HepG2 (cell line): ENCODE measurements at regions of chr19 and their contacts with region 1.

Region 1: GRCh38 chr19:58196901-58197616 is 14.2 kb downstream of the ZNF274 start:
- DNase-seq: peak; percentile 10
- ATAC-seq: no peak
- H3K4me3 ChIP-seq: no peak overlapping the region
- H3K27ac ChIP-seq: no peak overlapping the region
- H3K4me1 ChIP-seq: no peaks in the 10 kb centered on the region
- H3K27me3 ChIP-seq: no peaks in the 10 kb centered on the region; a peak in 1 of 5 replicates
- CTCF ChIP-seq: no peak
- EP300 ChIP-seq: no peak
- POLR2A ChIP-seq: no peak
- RAD21 ChIP-seq: no peak

Region 2: DNA sequence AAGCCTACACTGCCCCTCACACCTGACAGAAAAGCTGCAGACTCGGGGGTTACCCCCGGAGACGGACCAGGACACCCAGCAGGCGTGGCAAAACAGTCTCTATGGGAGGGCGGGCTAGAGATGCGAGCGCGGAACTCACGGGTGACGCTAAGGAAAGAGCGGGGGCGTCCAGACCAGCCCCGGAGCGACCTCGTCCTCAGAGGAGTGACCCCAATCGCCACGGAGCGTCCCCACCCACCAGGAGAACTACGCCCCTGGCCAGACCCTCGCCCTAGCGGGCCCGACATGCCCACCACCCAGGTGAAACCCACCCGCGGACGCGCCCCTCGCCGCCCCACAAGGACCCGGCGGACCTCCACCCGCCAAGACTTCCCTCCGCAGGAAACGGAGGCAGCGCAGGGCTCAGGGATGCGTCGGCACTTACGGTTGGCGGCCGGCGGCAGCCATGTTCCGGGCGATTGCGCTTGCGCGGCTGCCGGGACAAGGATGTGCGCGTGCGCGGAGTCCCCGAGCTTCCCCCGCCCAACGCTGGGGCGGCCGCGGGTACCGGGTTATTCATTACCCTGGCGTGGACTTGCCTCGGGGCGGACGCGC is 46.6 kb before region 1 on chr19 and contains the start of gene ZNF329:
- CTCF ChIA-PET with region 1: no interaction called
- POLR2A ChIA-PET with region 1: no interaction called
- in situ Hi-C with region 1: no loop called
- intact Hi-C with region 1: no loop called
- DNase-seq: peak; percentile 66
- ATAC-seq: peak; percentile 41
- H3K4me3 ChIP-seq: peak within 1 kb of the TSS; percentile 62 to 89 (median 85)
- H3K27ac ChIP-seq: peak within 1 kb of the TSS; percentile 73
- H3K4me1 ChIP-seq: peaks cover 15% of the 10 kb centered on the region
- H3K27me3 ChIP-seq: no peaks in the 10 kb centered on the region; a peak in 1 of 5 replicates
- CTCF ChIP-seq: peak; percentile 8; the same call in 1 of the 2 replicates
- EP300 ChIP-seq: no peak
- POLR2A ChIP-seq: peak; percentile 46 to 63; a peak in 3 of 4 replicates
- RAD21 ChIP-seq: no peak
- total RNA-seq, gene ZNF329: 9.6 and 11.4 TPM in 2 replicates

Region 3: GRCh38 chr19:58261968-58262921 is 65.2 kb after region 1 on chr19:
- CTCF ChIA-PET with region 1: no interaction called
- POLR2A ChIA-PET with region 1: no interaction called
- in situ Hi-C with region 1: loop called (anchors 10 kb)
- intact Hi-C with region 1: no loop called
- DNase-seq: no peak
- ATAC-seq: no peak
- H3K4me3 ChIP-seq: no peak overlapping the region
- H3K27ac ChIP-seq: no peak overlapping the region
- H3K4me1 ChIP-seq: no peaks in the 10 kb centered on the region
- H3K27me3 ChIP-seq: no peaks in the 10 kb centered on the region
- CTCF ChIP-seq: no peak
- EP300 ChIP-seq: no peak
- POLR2A ChIP-seq: no peak
- RAD21 ChIP-seq: no peak